GM10248 (cell line): ENCODE measurements at regions of chr9 and their contacts with region 1.

Region 1: DNA sequence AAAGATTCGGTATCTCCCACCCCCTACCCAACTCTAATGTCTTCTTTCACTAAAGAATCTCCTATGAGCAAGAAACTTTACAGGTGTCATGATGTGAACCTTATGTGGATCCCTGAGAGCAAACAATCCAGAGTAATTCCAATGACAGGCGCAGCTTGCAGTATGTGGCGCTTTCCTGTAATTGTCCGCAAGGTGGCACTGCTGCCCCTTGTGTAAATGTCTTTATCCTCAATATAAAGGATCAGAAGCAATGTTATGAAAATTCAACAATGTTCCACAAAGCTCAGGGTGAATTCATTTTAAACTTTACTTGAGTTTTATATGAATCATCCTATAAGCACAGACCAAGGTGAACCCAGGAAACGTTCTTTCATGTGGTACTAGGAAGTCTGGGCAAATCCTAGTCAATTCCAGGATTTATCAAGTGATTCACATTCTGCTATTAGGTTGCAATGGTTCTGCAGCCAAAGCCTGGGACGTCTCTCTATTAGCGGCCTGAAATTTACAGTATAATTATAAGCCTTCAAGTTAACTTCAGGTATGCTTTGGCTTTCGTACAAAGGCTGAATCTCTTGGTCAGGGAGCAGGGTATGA is 113.7 kb downstream of the TRPM6 start:
- DNase-seq: peak; percentile 57
- CTCF ChIP-seq: peak; percentile 92

Region 2: DNA sequence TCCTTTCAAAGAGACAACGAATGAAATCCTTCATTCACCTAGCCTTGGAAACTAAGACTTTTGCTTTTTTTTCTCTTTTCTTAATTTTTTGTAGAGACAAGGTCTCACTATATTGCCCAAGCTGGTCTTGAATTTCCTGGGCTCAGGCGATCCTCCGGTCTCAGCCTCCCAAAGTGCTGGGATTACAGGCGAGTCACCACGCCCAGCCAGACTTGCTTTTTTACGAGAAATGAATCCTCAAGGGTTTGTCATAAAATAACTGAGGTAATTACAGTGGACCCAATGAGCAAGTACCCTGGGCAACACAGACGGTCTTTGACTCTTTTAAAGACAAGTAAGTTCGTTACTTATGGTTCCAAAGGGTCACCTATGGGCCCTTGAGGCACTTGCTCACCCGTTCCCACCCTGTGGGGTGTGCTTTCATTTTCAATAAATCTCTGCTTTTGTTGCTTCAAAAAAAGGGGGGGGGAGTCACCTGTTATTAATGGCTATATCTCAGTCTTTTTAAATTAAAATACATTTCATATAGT is 43.4 kb after region 1 on chr9:
- CTCF ChIA-PET with region 1: no interaction called
- POLR2A ChIA-PET with region 1: no interaction called
- DNase-seq: no peak
- CTCF ChIP-seq: no peak

Region 3: DNA sequence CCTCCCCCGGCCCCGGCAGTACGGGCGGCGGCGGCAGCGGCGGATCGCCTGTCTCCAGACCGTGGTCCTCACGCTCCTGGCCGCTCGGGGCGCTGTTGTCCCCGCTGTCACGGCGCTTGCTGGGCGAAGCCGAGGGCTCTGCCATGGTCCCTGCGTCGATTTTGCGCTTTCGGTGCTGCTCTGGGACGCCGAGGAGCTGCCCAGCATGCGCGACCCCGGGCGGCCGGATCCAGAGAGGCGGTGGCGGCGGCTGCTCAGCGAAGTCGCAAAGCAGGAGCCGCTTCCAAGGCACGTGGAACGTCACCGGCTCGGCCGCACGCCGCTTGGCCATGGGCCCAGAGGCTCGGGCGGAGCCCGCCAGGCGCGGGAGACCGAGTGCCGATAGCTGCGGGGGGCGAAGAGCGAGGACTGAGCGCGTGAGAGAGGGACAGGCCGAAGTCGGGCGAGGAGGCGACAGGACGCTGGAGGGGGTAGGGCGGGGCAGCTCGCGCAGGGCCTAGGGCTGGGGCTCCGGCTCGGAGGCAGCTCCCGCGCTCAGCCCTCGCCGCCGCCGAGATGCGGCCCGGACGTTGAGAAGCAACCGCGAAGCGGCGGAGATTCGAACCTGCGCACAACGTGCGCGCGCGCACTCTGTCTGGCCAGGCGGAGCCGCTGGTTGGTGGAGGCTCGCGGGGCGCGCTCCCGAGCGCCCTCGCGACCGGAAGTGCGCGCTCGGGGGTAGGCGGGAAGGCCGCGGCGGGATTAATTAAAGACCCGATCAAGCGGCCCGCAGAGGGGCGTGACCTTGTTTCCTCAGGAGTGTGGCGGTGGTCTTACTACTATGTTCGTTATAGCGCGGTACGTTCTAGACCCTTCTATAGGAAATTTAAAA is 178.5 kb after region 1 on chr9 and contains the start of gene C9orf40:
- CTCF ChIA-PET with region 1: interaction called, 28 read pairs
- POLR2A ChIA-PET with region 1: no interaction called
- DNase-seq: peak; percentile 88
- CTCF ChIP-seq: peak; percentile 90

Region 4: DNA sequence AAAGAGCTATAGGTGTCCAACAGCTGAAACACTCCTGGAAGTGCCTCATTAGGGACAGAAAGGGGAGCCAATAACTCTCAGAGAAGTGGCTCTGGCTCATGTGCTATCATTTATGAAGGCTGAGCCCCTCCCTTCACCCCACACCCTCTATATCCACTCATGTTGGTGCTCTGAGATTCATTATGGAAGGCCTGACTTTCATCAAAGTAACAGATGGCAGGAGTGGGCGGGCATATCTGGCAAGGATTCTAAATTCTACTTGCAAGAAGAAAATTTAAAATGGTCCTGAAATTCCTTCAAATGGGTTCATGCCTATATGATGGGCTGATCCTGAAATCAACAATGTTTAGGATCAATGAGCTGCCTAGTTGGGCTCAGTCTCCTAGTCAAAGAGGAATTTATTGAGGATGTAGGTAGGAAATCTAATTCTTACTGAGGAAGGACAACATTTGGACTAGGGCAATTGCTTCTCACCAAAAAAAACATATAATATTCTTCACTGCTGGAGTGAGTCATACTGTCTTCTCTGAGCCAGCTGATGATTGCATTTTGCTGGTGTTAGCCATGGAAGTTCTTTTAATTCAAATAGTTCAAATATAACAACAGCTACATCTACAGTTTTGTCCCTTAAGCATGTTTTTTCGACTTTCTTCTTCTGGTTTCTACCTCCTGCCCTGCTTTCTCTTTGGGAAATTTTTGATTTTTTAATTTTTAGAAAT is 290.5 kb after region 1 on chr9:
- CTCF ChIA-PET with region 1: interaction called, 35 read pairs
- POLR2A ChIA-PET with region 1: no interaction called
- DNase-seq: no peak
- CTCF ChIP-seq: no peak

Region 5: DNA sequence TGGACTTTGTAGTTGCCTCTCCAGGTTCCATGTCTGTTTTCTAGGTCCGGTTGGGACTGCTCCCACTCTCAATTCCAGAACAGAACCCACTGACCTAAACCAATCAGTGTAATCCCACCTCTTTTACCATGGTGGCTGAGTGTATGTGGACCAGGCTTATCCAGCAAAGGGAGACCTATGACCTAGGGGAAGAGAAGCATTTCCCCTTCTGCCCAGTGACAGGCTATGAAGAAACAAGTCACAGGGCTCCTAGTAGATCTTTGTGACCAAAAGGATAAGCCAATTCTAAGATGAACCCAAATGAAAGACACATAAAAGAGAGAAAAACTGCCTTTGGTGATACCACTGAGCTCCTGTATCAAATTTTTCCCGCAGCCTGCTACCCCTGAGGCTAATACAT is 307.6 kb after region 1 on chr9:
- CTCF ChIA-PET with region 1: interaction called, 112 read pairs
- POLR2A ChIA-PET with region 1: no interaction called
- DNase-seq: no peak
- CTCF ChIP-seq: no peak